ENCODE measurements at regions of chr4 and their contacts with region 1.

Region 1: DNA sequence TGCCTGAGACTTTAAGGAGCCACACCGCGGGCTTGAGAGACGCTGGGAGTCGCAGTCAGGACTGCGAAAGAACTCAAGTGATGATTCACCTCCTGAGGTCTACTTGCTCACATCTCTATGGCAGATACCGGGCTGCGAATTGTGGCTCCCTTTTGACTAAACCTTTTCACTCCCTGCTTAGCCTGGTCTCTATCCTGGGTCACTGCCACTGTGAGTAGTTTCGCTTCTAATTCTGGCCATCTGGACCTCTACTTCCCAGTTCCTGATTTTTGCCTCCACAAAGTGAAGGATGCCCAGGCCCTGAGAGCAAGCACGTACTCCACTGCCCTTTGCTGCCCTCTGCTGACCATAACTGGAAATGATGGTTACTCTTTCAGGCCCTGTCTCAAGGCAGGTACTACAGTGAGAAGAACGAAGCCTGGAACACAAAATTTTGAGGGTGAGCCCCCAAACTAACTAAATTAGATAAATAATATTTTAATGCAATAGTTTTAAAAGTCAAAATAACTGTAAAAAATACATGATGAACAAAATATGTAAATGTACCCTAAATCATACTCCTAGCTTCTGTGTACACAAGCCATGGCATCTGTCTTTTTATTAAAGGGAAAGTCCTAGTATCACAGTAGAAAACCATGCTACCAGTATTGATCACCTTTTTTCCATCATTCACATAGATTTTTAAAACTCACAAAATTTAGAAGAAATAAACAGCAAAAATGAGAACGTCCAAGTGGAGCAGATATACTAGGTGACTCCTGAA is 16.7 kb downstream of the MAD2L1 start:
- DNase-seq: peak in 9 of 10 donors; percentile 62 to 91 (median 75)
- H3K4me3 ChIP-seq: peak overlapping the region in 38 of 59 donors; percentile 3 to 50 (median 30)
- H3K27ac ChIP-seq: peak overlapping the region in 14 of 59 donors; percentile 3 to 59 (median 18)
- H3K27me3 ChIP-seq: no peaks in the 10 kb centered on the region
- CTCF ChIP-seq: peak; percentile 73 to 96 (median 88)

Region 2: DNA sequence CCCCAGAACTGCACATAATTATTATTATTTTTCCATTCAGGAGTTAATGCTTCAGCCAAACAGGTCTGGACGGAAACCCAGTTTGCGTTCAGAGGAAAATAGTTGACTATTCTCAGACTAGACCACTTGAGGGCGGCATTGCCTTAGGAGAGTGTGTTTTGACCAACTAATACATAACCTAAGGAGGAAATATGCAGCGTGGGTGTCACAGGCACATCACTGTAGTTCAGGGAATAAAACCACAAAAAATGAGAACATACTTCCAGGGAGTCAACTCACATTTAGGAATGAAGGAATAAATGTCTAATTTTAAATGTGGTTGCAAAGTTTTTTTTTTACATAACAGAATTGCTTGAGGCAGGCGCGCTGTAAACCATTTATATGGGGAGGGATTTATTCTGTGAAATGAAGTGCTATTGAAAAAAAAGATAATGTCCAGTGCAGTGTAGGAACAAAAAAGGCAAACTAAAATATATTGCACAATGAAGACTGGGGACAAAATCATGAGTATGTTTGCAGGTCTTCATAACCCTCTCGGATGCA is 1068.0 kb before region 1 on chr4:
- intact Hi-C with region 1: loop called in 1 of 2 experiments (anchors 10 kb)
- DNase-seq: peak in 7 of 10 donors; percentile 32 to 73 (median 51)
- H3K4me3 ChIP-seq: peak overlapping the region in 9 of 59 donors; percentile 4 to 37 (median 17)
- H3K27ac ChIP-seq: peak overlapping the region in 6 of 59 donors; percentile 2 to 46 (median 30)
- H3K27me3 ChIP-seq: no peaks in the 10 kb centered on the region
- CTCF ChIP-seq: peak; percentile 61 to 88 (median 75)

Region 3: GRCh38 chr4:119315036-119315435 is 734.9 kb before region 1 on chr4:
- intact Hi-C with region 1: loop called in 1 of 2 experiments (anchors 5 kb)
- DNase-seq: no peak
- H3K4me3 ChIP-seq: no peak overlapping the region
- H3K27ac ChIP-seq: no peak overlapping the region
- H3K27me3 ChIP-seq: no peaks in the 10 kb centered on the region
- CTCF ChIP-seq: no peak

Region 4: GRCh38 chr4:119559044-119559647 is 490.8 kb before region 1 on chr4:
- intact Hi-C with region 1: loop called (anchors 5 to 10 kb)
- DNase-seq: no peak
- H3K4me3 ChIP-seq: no peak overlapping the region
- H3K27ac ChIP-seq: no peak overlapping the region
- H3K27me3 ChIP-seq: peaks cover 0 to 3% (median 0%) of the 10 kb centered on the region in 45 donors
- CTCF ChIP-seq: peak; percentile 12 to 77 (median 57)

Region 5: GRCh38 chr4:119628308-119629141 is 421.4 kb before region 1 on chr4 and contains the start of gene PDE5A:
- intact Hi-C with region 1: loop called (anchors 5 kb)
- DNase-seq: peak; percentile 40 to 81 (median 50)
- H3K4me3 ChIP-seq: peak within 1 kb of the TSS; percentile 53 to 85 (median 75)
- H3K27ac ChIP-seq: peak within 1 kb of the TSS in 48 of 59 donors; percentile 2 to 87 (median 62)
- H3K27me3 ChIP-seq: peaks cover 0 to 8% (median 0%) of the 10 kb centered on the region in 45 donors
- CTCF ChIP-seq: peak; percentile 31 to 90 (median 73)
- total RNA-seq, gene PDE5A: 2.0 to 17.7 (median 6.1) TPM